Activated B cell treated with CpG ODN at 0.5 μM for 24 hours (primary cell): ENCODE measurements at regions of chr19 and their contacts with region 1.

Region 1: GRCh38 chr19:35931161-35931873 is 4.9 kb upstream of the LRFN3 start:
- DNase-seq: peak; percentile 99
- ATAC-seq: peak; percentile 94
- H3K4me3 Mint-ChIP-seq: peak overlapping the region; percentile 72
- H3K27ac Mint-ChIP-seq: peak overlapping the region; percentile 87
- H3K4me1 Mint-ChIP-seq: peaks cover 48% of the 10 kb centered on the region
- H3K27me3 Mint-ChIP-seq: peaks cover 4% of the 10 kb centered on the region
- CTCF ChIP-seq: no peak

Region 2: DNA sequence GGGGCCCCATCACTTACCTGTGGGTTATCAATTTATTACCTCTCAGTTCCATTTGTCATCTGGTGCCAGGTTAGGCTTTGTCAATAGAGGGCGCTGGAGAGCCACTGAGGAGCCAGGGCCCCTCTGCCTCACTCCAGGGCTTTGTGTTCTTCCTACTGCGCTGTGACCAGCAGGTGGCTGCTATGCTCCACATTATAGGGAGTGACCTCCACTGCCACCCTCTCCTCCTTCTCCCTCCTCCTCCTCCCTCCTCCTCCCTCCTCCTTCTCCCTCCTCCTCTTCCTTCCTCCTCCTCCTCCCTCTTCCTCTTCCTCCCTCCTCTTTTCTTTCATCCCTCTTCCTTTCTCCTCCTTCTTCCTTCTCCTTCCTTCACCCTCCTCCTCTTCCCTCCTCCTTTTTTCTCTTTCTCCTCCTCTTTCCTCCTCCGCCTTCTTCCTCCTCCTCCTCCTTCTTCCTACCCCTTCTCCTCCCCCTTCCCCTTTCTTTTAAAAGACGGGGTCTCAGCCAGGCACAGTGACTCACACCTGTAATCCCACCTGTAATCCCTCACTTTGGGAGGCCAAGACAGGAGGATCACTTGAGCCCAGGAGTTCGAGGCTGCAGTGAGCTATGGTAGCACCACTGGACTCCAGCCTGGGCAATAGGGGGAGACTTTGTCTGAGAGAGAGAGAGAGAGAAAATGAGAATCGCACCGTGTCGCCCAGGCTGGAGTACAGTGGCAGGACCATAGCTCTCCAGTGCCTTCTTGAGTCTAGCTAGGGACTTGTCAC is 237.3 kb before region 1 on chr19:
- CTCF ChIA-PET with region 1: no interaction called
- POLR2A ChIA-PET with region 1: no interaction called
- intact Hi-C with region 1: loop called (anchors 1 kb)
- DNase-seq: peak; percentile 76
- ATAC-seq: peak; percentile 100
- H3K4me3 Mint-ChIP-seq: no peak overlapping the region
- H3K27ac Mint-ChIP-seq: no peak overlapping the region
- H3K4me1 Mint-ChIP-seq: peaks cover 3% of the 10 kb centered on the region
- H3K27me3 Mint-ChIP-seq: peaks cover 4% of the 10 kb centered on the region
- CTCF ChIP-seq: no peak

Region 3: GRCh38 chr19:35775298-35776110 is 155.8 kb before region 1 on chr19 and contains the start of gene ARHGAP33:
- CTCF ChIA-PET with region 1: no interaction called
- POLR2A ChIA-PET with region 1: no interaction called
- intact Hi-C with region 1: loop called (anchors 1 kb)
- DNase-seq: peak; percentile 97
- ATAC-seq: peak; percentile 99
- H3K4me3 Mint-ChIP-seq: peak within 1 kb of the TSS; percentile 79
- H3K27ac Mint-ChIP-seq: no peak within 1 kb of the TSS
- H3K4me1 Mint-ChIP-seq: peaks cover 9% of the 10 kb centered on the region
- H3K27me3 Mint-ChIP-seq: no peaks in the 10 kb centered on the region
- CTCF ChIP-seq: no peak
- total RNA-seq, gene ARHGAP33: 9.3 and 15.0 TPM in 2 replicates

Region 4: GRCh38 chr19:35899547-35900214 is 31.6 kb before region 1 on chr19:
- CTCF ChIA-PET with region 1: no interaction called
- POLR2A ChIA-PET with region 1: interaction called, 48 read pairs
- intact Hi-C with region 1: loop called (anchors 1 kb)
- DNase-seq: peak; percentile 93
- ATAC-seq: peak; percentile 57
- H3K4me3 Mint-ChIP-seq: peak overlapping the region; percentile 95
- H3K27ac Mint-ChIP-seq: peak overlapping the region; percentile 95
- H3K4me1 Mint-ChIP-seq: peaks cover 77% of the 10 kb centered on the region
- H3K27me3 Mint-ChIP-seq: no peaks in the 10 kb centered on the region
- CTCF ChIP-seq: no peak

Region 5: GRCh38 chr19:36014029-36014924 is 83.0 kb after region 1 on chr19 and contains the start of gene ALKBH6:
- CTCF ChIA-PET with region 1: no interaction called
- POLR2A ChIA-PET with region 1: no interaction called
- intact Hi-C with region 1: loop called (anchors 1 kb)
- DNase-seq: peak; percentile 94
- ATAC-seq: peak; percentile 99
- H3K4me3 Mint-ChIP-seq: peak within 1 kb of the TSS; percentile 98
- H3K27ac Mint-ChIP-seq: peak within 1 kb of the TSS; percentile 95
- H3K4me1 Mint-ChIP-seq: peaks cover 29% of the 10 kb centered on the region
- H3K27me3 Mint-ChIP-seq: no peaks in the 10 kb centered on the region
- CTCF ChIP-seq: no peak
- total RNA-seq, gene ALKBH6: 32.7 and 39.7 TPM in 2 replicates